ENCODE measurements at regions of chr1 and their contacts with region 1.

Region 1: GRCh38 chr1:117059678-117060440 is at the start of gene TTF2:
- DNase-seq: peak; percentile 97
- ATAC-seq: peak; percentile 91
- H3K4me3 Mint-ChIP-seq: no peak within 1 kb of the TSS
- H3K27ac Mint-ChIP-seq: no peak within 1 kb of the TSS
- H3K4me1 Mint-ChIP-seq: peaks cover 47% of the 10 kb centered on the region
- H3K27me3 Mint-ChIP-seq: no peaks in the 10 kb centered on the region
- CTCF ChIP-seq: no peak
- total RNA-seq, gene TTF2: 126 to 127 TPM

Region 2: GRCh38 chr1:116737020-116737854 is 322.6 kb before region 1 on chr1:
- CTCF ChIA-PET with region 1: interaction called, 39 read pairs
- POLR2A ChIA-PET with region 1: interaction called, 32 read pairs
- intact Hi-C with region 1: loop called (anchors 2 kb)
- DNase-seq: peak; percentile 86
- ATAC-seq: peak; percentile 60
- H3K4me3 Mint-ChIP-seq: peak overlapping the region; percentile 76
- H3K27ac Mint-ChIP-seq: peak overlapping the region; percentile 100
- H3K4me1 Mint-ChIP-seq: peaks cover 68% of the 10 kb centered on the region
- H3K27me3 Mint-ChIP-seq: no peaks in the 10 kb centered on the region
- CTCF ChIP-seq: peak; percentile 91

Region 3: GRCh38 chr1:116769561-116769977 is 290.3 kb before region 1 on chr1:
- CTCF ChIA-PET with region 1: interaction called, 14 read pairs
- POLR2A ChIA-PET with region 1: interaction called, 108 read pairs
- intact Hi-C with region 1: loop called (anchors 5 kb)
- DNase-seq: peak; percentile 89
- ATAC-seq: peak; percentile 56
- H3K4me3 Mint-ChIP-seq: peak overlapping the region; percentile 98
- H3K27ac Mint-ChIP-seq: peak overlapping the region; percentile 99
- H3K4me1 Mint-ChIP-seq: peaks cover 92% of the 10 kb centered on the region
- H3K27me3 Mint-ChIP-seq: no peaks in the 10 kb centered on the region
- CTCF ChIP-seq: no peak

Region 4: DNA sequence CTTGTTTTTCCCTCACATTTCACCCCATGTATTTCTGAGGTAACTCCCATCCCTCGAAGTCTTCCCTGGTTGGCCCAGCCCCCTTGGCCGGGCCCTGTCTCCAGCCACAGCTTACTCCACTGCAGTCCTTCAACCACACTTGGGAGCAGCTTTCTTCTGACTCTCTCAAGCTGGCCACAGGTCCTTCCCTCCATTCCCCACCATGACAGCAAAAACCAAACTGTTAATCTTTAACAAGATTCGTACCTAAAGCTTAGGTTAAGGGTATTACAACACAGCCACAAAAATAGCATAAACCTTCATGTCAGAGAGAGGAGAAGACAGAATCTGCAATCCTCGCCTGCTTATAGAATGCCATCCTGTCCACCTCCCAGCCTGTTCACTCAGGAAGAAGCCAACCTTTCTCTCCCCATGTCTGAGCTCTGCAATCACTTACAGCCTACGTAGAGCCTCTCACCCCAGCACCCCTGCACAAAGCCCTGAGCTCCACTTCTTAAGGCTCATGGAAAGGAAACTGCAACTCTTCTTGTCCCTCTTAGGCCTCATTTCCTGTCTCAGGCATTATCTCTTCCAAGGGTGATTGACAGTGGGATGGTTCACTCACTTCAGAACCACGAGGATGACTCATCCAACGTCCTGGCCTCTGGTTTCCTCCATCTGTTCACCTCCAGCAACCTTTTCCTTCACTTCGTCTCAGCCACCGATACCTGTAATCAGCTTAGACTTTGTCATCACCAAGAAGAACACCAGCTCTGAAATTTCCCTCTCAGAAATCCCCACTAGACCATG is 232.8 kb before region 1 on chr1:
- CTCF ChIA-PET with region 1: interaction called, 6 read pairs
- POLR2A ChIA-PET with region 1: interaction called, 11 read pairs
- intact Hi-C with region 1: no loop called
- DNase-seq: peak; percentile 90
- ATAC-seq: peak; percentile 91
- H3K4me3 Mint-ChIP-seq: peak overlapping the region; percentile 76
- H3K27ac Mint-ChIP-seq: peak overlapping the region; percentile 97
- H3K4me1 Mint-ChIP-seq: peaks cover 55% of the 10 kb centered on the region
- H3K27me3 Mint-ChIP-seq: no peaks in the 10 kb centered on the region
- CTCF ChIP-seq: no peak

Region 5: DNA sequence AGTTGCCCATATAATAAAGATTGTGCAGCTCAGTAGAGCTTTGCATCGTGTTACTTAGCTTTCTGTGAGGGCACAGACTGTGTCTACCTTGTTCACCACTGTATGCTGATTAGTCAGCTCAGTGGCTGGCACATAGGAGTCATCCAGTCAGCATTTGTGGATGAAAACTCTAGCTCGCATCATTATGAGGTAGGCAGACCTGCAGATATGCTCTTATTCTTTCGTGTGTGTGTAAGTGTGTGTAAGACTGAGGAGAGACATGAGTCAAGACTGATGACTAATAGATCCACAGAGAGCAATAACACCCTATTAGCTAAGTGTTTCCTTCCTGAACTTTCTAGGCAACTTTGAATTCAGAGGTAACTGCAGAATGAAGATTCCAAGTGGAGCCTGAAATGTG is 17.4 kb after region 1 on chr1:
- CTCF ChIA-PET with region 1: interaction called, 5 read pairs
- POLR2A ChIA-PET with region 1: interaction called, 13 read pairs
- intact Hi-C with region 1: no loop called
- DNase-seq: peak; percentile 70
- ATAC-seq: peak; percentile 98
- H3K4me3 Mint-ChIP-seq: no peak overlapping the region
- H3K27ac Mint-ChIP-seq: peak overlapping the region; percentile 76
- H3K4me1 Mint-ChIP-seq: peaks cover 38% of the 10 kb centered on the region
- H3K27me3 Mint-ChIP-seq: no peaks in the 10 kb centered on the region
- CTCF ChIP-seq: no peak

Region 6: GRCh38 chr1:117128323-117129079 is 68.6 kb after region 1 on chr1:
- CTCF ChIA-PET with region 1: interaction called, 10 read pairs
- POLR2A ChIA-PET with region 1: interaction called, 3 read pairs
- intact Hi-C with region 1: loop called (anchors 5 kb)
- DNase-seq: no peak
- ATAC-seq: no peak
- H3K4me3 Mint-ChIP-seq: no peak overlapping the region
- H3K27ac Mint-ChIP-seq: no peak overlapping the region
- H3K4me1 Mint-ChIP-seq: no peaks in the 10 kb centered on the region
- H3K27me3 Mint-ChIP-seq: peaks cover 3% of the 10 kb centered on the region
- CTCF ChIP-seq: peak; percentile 64

Region 7: GRCh38 chr1:117138561-117138960 is 78.7 kb after region 1 on chr1:
- CTCF ChIA-PET with region 1: no interaction called
- POLR2A ChIA-PET with region 1: no interaction called
- intact Hi-C with region 1: no loop called
- DNase-seq: no peak
- ATAC-seq: no peak
- H3K4me3 Mint-ChIP-seq: no peak overlapping the region
- H3K27ac Mint-ChIP-seq: no peak overlapping the region
- H3K4me1 Mint-ChIP-seq: no peaks in the 10 kb centered on the region
- H3K27me3 Mint-ChIP-seq: peaks cover 6% of the 10 kb centered on the region
- CTCF ChIP-seq: no peak

Measured in activated CD8-positive, alpha-beta T cell treated with anti-CD3 and anti-CD28 coated beads for 36 hours (primary cell).